PC-9 (cell line): ENCODE measurements at regions of chr3 and their contacts with region 1.

Region 1: DNA sequence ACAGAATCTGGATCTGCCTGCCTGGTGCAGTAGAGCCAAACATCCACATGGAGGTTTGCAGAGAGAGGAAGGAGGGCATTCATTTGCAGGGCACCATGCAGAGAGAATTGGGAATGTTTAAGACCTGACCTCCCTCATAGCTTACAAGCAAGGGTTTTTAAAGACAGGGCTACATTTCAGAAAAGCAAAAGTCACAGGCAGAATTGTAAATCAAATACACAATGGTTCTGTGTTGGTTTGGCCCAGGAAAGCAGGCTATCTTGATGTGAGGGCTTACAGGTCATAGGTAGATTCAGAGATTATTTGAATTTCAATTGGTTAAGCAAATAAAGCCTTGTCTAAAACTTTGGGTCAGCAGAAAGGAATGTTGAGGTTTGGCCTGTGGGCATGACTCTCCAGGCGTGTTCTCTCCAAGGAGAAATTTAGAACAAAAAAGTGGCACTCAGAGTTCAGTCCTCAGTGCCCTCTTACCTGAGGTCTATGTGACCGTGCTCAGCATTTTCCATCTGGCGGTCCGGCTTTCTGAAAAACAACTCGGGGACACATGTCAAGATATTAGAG is 91.5 kb downstream of the CD47 start:
- DNase-seq: peak; percentile 82 to 99
- H3K4me3 ChIP-seq: no peak overlapping the region
- H3K27ac ChIP-seq: peak overlapping the region; percentile 77
- H3K4me1 ChIP-seq: peaks cover 71% of the 10 kb centered on the region
- H3K27me3 ChIP-seq: no peaks in the 10 kb centered on the region
- CTCF ChIP-seq: 0 out of 2 replicates have a peak, but pooled peaks have one; percentile 32

Region 2: GRCh38 chr3:107927361-107928083 is 71.8 kb before region 1 on chr3:
- CTCF ChIA-PET with region 1: no interaction called
- POLR2A ChIA-PET with region 1: no interaction called
- intact Hi-C with region 1: no loop called
- DNase-seq: peak; percentile 74 to 79
- H3K4me3 ChIP-seq: peak overlapping the region; percentile 65
- H3K27ac ChIP-seq: no peak overlapping the region
- H3K4me1 ChIP-seq: no peaks in the 10 kb centered on the region
- H3K27me3 ChIP-seq: no peaks in the 10 kb centered on the region
- CTCF ChIP-seq: peak; percentile 99

Region 3: DNA sequence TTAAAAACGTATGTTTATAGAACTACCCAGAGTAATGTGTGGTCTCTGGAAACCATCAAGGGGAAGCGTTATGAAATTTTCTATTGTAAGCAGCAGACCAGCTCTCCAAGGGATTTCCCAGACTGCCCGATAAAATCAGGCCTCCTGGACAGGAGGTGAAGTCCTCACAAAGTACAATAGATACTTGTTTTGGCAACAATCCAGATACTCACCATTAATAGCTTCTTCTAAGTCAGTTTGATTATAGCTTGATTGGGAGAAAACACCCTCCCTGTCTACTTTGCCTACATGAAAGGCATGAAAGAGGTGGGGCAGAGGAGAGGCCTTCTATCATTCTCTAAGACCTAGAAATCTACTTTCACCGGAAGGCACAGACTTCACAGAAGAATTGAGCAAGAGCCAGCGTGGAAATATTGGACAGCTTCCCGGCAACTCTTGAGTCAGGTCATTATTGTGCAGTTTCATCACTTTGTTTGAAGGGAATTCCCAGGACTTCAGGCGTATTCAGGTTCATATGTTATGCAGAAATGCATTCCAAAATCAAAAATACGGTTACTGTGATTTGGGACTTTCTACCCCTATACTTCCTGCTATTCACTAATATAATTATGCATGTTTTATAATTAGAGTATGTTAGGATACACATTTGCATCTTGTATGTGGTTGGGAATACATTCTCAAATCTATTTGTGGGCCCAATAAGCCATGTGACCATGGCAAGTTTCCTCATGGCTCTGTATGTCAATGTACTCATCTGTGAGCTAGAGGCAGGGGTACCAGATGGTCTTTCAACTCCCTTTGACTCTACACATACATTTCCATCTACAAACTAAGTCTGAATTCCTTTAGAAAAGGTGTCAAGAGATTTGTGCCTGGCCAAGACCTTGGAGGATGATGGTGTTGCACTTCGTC is 12.0 kb before region 1 on chr3:
- CTCF ChIA-PET with region 1: no interaction called
- POLR2A ChIA-PET with region 1: no interaction called
- intact Hi-C with region 1: loop called (anchors 1 kb)
- DNase-seq: peak; percentile 81 to 97
- H3K4me3 ChIP-seq: no peak overlapping the region
- H3K27ac ChIP-seq: peak overlapping the region; percentile 83
- H3K4me1 ChIP-seq: peaks cover 56% of the 10 kb centered on the region
- H3K27me3 ChIP-seq: no peaks in the 10 kb centered on the region
- CTCF ChIP-seq: no peak